Right cardiac atrium (tissue), 5 donors: ENCODE measurements at regions of chr17 and their contacts with region 1.

Region 1: DNA sequence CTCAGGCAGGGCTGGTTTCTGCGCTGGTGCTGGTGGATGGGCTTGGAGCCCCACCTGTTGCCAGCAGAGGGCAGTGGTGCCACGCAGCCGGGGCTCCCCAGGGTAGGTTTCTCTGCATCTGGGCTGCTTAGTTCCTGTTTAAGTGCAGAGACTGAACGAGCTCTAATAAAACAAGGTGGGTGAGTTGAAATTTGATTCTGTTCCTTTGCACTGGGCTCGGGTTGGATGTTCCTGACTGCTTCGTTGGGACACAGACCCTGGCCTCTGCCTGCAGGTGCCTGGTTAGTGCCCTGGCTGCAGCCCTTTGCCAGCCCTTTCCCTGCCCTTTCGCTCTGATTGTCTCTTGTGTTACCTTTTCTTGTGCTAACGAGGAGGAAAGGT is 30.0 kb downstream of the TBCD start:
- DNase-seq: peak; percentile 82 to 93 (median 92)
- ATAC-seq: peak; percentile 93 to 94
- H3K4me3 ChIP-seq: no peak overlapping the region
- H3K27ac ChIP-seq: no peak overlapping the region
- H3K4me1 ChIP-seq: no peaks in the 10 kb centered on the region
- H3K27me3 ChIP-seq: no peaks in the 10 kb centered on the region

Region 2: DNA sequence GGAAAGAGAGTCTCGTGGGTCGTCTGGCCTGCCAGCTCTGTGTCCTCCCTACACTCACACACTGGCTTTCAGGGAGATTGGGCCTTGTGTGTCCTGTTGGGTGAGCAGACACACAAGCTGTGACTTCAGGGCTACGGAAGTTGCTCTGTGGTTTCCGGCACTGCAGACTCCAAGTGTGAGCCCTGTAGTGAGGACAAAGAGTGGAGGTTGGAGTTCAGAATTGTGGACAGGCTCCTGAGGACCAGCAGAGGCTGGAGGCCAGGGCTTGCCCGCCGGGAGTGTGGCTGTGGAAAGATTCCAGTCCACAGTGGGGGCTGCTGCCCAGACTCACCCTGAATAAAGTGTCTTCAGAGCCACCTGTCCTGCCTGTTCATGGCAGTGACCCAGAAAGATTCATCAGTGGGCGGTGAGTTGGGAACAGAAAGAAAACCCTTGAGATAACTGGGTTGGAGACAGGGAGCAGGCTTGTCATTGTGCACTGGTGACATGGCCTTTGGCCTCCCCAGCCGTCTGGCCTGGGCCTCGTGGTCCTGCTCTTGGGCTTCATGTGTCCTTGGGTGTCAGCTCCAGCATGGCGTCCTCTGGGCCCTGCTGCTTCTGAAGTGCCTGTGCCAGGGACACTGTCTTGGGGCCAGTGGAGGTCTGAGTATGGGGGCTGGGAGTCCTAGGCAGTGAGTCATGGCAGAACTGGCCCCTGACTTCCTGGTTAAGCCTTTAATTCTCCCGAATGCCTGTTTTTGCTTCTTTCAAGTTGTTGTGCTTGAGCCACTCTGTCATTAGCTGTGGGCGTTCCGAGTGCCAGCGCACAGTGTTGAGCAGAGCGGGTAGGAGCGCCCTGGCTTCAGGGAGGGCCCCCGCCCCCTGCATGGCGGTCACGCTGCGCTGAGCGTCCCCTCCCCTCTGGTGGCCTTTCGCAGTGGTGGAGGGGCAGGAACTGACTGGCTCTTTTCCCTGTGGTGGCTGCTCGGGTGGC is 77.8 kb after region 1 on chr17:
- intact Hi-C with region 1: no loop called
- DNase-seq: peak in 2 of 3 donors; percentile 77 to 82
- ATAC-seq: peak; percentile 64 to 65
- H3K4me3 ChIP-seq: no peak overlapping the region
- H3K27ac ChIP-seq: peak overlapping the region; percentile 3
- H3K4me1 ChIP-seq: no peaks in the 10 kb centered on the region
- H3K27me3 ChIP-seq: no peaks in the 10 kb centered on the region

Region 3: DNA sequence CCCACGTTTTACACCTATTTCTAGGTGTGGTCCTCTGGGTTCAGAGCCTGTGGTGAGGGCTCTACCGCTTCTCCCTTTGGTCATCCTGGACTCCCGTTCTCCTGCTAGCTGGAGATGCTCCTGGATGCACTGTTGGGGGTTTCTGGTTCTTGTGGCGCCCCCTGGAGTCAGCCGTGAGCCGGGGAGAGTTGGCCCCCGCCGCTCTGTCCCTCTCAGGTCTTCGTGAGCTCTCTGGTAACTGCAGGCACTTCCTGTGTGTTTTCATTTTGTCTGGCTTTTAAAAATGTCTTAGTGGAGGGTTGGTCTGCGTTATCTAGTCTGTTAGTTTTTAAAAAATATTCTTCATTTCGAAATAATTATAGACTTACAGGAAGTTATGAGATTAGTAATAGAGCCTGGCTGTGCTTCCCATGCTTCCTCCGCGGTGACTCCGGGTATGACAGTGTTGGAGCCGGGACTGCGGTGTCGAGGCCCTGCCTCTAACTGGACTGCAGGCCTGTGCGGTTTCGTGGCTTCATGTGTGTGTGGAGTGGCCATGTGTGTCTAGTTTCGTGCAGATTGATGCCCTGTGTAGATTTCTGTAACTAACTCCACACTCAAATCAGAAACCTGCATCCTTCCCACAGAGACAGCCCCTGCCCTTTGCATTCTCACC is 135.9 kb after region 1 on chr17:
- intact Hi-C with region 1: loop called in 3 of 4 experiments (anchors 5 to 10 kb)
- DNase-seq: peak; percentile 39 to 74 (median 54)
- ATAC-seq: peak in 1 of 2 donors; percentile 34
- H3K4me3 ChIP-seq: no peak overlapping the region
- H3K27ac ChIP-seq: no peak overlapping the region
- H3K4me1 ChIP-seq: no peaks in the 10 kb centered on the region
- H3K27me3 ChIP-seq: no peaks in the 10 kb centered on the region

Region 4: DNA sequence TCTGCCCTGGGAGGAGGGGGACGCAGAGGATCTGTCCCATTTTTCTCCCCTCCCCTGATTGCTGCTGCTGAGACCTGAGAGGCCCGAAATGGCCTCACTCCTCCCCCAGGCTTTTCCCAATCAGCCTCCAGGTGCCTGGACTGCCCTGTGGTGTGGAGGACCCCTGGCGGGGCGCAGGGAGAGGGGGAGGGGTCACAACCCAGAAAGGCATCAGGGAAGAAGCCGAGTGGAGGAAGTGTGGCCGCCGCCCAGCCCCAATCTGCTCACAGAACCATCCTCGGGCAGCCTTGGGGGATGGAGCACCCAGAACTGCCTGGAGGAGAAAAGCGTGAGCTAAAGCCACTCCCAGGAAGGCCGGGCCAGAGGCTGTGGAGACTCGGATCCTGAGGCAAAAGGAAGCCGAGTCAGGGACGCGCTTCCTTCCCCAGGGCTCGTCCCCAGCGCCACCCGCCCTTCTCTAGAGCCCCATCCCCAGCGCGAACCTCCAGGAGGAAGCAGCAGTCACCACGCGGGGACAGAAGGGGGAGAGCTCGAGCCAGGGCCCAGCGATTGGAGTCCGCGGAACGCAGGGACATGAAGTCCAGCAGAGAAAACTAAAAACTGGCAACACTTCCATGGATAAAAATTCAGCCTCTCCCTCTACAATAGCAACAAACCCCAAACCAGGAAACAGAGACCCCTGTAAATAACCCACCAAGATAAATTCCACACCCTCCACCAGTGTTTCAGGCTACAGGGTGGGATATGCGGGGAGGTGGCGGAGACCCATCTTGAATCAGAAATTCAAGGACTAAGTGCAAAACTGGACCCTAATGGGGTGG is 181.2 kb after region 1 on chr17:
- intact Hi-C with region 1: loop called in 2 of 4 experiments (anchors 5 to 10 kb)
- DNase-seq: peak; percentile 88 to 94 (median 94)
- ATAC-seq: peak; percentile 94 to 96
- H3K4me3 ChIP-seq: no peak overlapping the region
- H3K27ac ChIP-seq: no peak overlapping the region
- H3K4me1 ChIP-seq: no peaks in the 10 kb centered on the region
- H3K27me3 ChIP-seq: no peaks in the 10 kb centered on the region